K562 (cell line): ENCODE measurements at regions of chr3 and their contacts with region 1.

Region 1: GRCh38 chr3:152508705-152509104 is 240.0 kb downstream of the MBNL1 start:
- DNase-seq: peak; percentile 29 to 44 (median 40)
- ATAC-seq: peak; percentile 67; the same call in 2 of the 3 replicates
- H3K4me3 ChIP-seq: no peak overlapping the region
- H3K27ac ChIP-seq: no peak overlapping the region
- H3K4me1 ChIP-seq: no peaks in the 10 kb centered on the region
- H3K27me3 ChIP-seq: no peaks in the 10 kb centered on the region
- CTCF ChIP-seq: peak; percentile 28 to 66 (median 36); a peak in 4 of 6 replicates
- EP300 ChIP-seq: no peak
- POLR2A ChIP-seq: no peak
- RAD21 ChIP-seq: peak; percentile 75 to 85

Region 2: GRCh38 chr3:152719264-152719663 is 210.6 kb after region 1 on chr3:
- CTCF ChIA-PET with region 1: no interaction called
- POLR2A ChIA-PET with region 1: no interaction called
- in situ Hi-C with region 1: no loop called
- intact Hi-C with region 1: loop called (anchors 10 kb)
- DNase-seq: peak in 2 of 4 experiments; percentile 13 to 15
- ATAC-seq: no peak
- H3K4me3 ChIP-seq: no peak overlapping the region
- H3K27ac ChIP-seq: no peak overlapping the region
- H3K4me1 ChIP-seq: peaks cover 0 to 3% of the 10 kb centered on the region in 2 experiments; a peak in 1 of 5 replicates
- H3K27me3 ChIP-seq: no peaks in the 10 kb centered on the region
- CTCF ChIP-seq: no peak
- EP300 ChIP-seq: no peak
- POLR2A ChIP-seq: no peak
- RAD21 ChIP-seq: no peak

Region 3: GRCh38 chr3:152937234-152937633 is 428.5 kb after region 1 on chr3:
- CTCF ChIA-PET with region 1: no interaction called
- POLR2A ChIA-PET with region 1: no interaction called
- in situ Hi-C with region 1: no loop called
- intact Hi-C with region 1: loop called (anchors 10 kb)
- DNase-seq: no peak
- ATAC-seq: no peak
- H3K4me3 ChIP-seq: no peak overlapping the region
- H3K27ac ChIP-seq: no peak overlapping the region
- H3K4me1 ChIP-seq: no peaks in the 10 kb centered on the region
- H3K27me3 ChIP-seq: no peaks in the 10 kb centered on the region
- CTCF ChIP-seq: peak in 1 of 3 experiments; percentile 30; a peak in 2 of 6 replicates
- EP300 ChIP-seq: no peak
- POLR2A ChIP-seq: no peak
- RAD21 ChIP-seq: peak in 1 of 2 experiments; percentile 50; a peak in 2 of 4 replicates

Region 4: GRCh38 chr3:152961323-152961722 is 452.6 kb after region 1 on chr3:
- CTCF ChIA-PET with region 1: interaction called, 6 read pairs
- POLR2A ChIA-PET with region 1: no interaction called
- in situ Hi-C with region 1: no loop called
- intact Hi-C with region 1: loop called (anchors 1 kb)
- DNase-seq: peak; percentile 28 to 54 (median 36)
- ATAC-seq: peak; percentile 85
- H3K4me3 ChIP-seq: no peak overlapping the region
- H3K27ac ChIP-seq: no peak overlapping the region
- H3K4me1 ChIP-seq: peaks cover 4 to 7% of the 10 kb centered on the region in 2 experiments; a peak in 3 of 5 replicates
- H3K27me3 ChIP-seq: no peaks in the 10 kb centered on the region
- CTCF ChIP-seq: peak in 2 of 3 experiments; percentile 41 to 55; a peak in 5 of 6 replicates
- EP300 ChIP-seq: no peak
- POLR2A ChIP-seq: no peak
- RAD21 ChIP-seq: peak; percentile 76 to 82